ENCODE measurements at regions of chr5 and their contacts with region 1.

Region 1: DNA sequence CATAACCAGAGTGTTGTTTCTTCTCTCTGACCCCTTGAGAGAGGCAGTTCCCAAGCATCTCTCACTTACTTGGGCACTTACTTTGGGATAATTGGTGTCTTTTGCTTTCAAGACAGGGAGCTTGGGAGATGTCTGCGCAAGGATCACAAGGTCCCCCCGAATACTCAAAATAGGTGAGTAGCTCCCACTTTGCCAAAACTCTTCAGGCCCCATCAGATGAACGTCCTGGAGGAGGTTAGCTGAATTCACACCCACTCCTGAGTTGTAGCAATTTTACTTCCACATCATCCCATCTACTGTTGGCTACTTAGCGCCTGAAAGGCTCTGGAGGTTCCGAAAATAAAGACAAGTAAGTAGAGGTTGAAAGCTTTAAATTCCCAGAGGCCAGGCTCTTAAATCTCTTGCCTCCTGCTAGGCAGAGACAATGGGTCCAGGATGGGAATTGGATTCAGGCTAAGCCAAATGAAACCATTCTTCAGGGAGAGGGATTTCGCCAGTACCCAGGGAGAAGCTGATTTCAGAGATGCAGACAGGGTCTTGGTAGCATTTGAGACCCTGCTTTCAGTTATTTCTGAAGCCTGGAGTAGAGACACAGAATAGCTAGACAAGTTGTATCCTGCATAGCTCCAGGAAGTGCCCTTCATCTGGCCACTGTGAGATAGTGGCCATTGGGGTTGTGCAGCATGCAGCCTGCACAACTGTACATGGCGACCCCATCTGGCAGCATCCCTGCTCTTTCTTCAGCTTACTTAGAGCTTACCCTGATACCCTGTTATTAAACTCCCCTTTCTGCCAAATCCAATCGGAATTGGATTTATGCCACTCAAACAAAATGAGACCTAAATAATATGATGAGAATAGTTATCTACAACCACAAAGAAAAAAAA is 60.1 kb downstream of the BOD1 start:
- DNase-seq: no peak
- H3K4me3 ChIP-seq: no peak overlapping the region
- H3K27ac ChIP-seq: no peak overlapping the region
- H3K4me1 ChIP-seq: no peaks in the 10 kb centered on the region
- H3K27me3 ChIP-seq: no peaks in the 10 kb centered on the region
- CTCF ChIP-seq: no peak

Region 2: GRCh38 chr5:173537228-173537627 is 19.2 kb before region 1 on chr5:
- CTCF ChIA-PET with region 1: interaction called, 12 read pairs
- POLR2A ChIA-PET with region 1: no interaction called
- intact Hi-C with region 1: no loop called
- DNase-seq: no peak
- H3K4me3 ChIP-seq: no peak overlapping the region
- H3K27ac ChIP-seq: no peak overlapping the region
- H3K4me1 ChIP-seq: no peaks in the 10 kb centered on the region
- H3K27me3 ChIP-seq: peaks cover 6% of the 10 kb centered on the region
- CTCF ChIP-seq: no peak